ENCODE measurements at regions of chr22 and their contacts with region 1.

Region 1: GRCh38 chr22:33049119-33049729 is 9.0 kb downstream of the SYN3 start:
- DNase-seq: peak in 4 of 5 donors; percentile 25 to 36 (median 32)
- H3K4me3 ChIP-seq: no peak overlapping the region
- H3K4me3 Mint-ChIP-seq: no peak overlapping the region
- H3K27ac ChIP-seq: no peak overlapping the region
- H3K27ac Mint-ChIP-seq: no peak overlapping the region
- H3K4me1 ChIP-seq: no peaks in the 10 kb centered on the region
- H3K4me1 Mint-ChIP-seq: peaks cover 0 to 4% (median 0%) of the 10 kb centered on the region in 4 donors
- H3K27me3 ChIP-seq: no peaks in the 10 kb centered on the region
- H3K27me3 Mint-ChIP-seq: peaks cover 12 to 28% of the 10 kb centered on the region in 2 donors

Region 2: GRCh38 chr22:32528984-32529982 is 519.9 kb before region 1 on chr22:
- CTCF ChIA-PET with region 1: interaction called, 5 read pairs
- POLR2A ChIA-PET with region 1: no interaction called
- intact Hi-C with region 1: loop called (anchors 1 kb)
- DNase-seq: peak; percentile 34 to 50 (median 42)
- H3K4me3 ChIP-seq: no peak overlapping the region
- H3K4me3 Mint-ChIP-seq: no peak overlapping the region
- H3K27ac ChIP-seq: no peak overlapping the region
- H3K27ac Mint-ChIP-seq: no peak overlapping the region
- H3K4me1 ChIP-seq: no peaks in the 10 kb centered on the region
- H3K4me1 Mint-ChIP-seq: no peaks in the 10 kb centered on the region
- H3K27me3 ChIP-seq: no peaks in the 10 kb centered on the region
- H3K27me3 Mint-ChIP-seq: peaks cover 7 to 8% of the 10 kb centered on the region in 2 donors

Region 3: DNA sequence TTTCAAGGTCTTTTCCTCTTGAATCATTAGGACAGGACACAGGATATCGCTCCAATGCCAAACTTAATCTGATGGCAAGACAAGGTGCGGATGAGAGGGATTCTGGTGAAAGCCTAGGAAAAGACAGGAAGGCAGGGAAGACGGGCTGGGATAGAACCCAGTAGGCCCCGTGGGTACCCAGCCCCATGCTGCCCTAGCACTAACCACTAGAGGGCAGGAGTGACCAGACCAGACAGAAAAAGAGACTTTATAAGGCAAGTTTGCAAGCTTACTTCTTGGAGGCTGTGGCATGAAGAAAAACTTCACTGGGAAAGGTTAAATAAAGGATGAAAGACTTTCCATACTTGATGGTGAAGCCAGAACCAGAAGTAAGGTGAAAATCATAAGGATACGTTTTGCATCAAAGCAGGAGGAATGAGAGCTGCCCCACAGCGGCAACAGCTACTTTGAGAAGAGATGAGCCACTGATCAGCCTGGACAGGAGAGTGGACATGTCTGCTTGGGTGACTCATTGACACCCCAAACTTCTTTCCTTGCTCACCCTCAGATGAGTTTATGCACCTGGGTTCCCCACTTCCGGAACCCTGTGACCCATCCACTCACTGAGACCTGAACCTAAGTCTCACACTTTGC is 30.9 kb before region 1 on chr22:
- CTCF ChIA-PET with region 1: interaction called, 11 read pairs
- POLR2A ChIA-PET with region 1: no interaction called
- intact Hi-C with region 1: no loop called
- DNase-seq: peak in 2 of 5 donors; percentile 7 to 9
- H3K4me3 ChIP-seq: no peak overlapping the region
- H3K4me3 Mint-ChIP-seq: no peak overlapping the region
- H3K27ac ChIP-seq: no peak overlapping the region
- H3K27ac Mint-ChIP-seq: no peak overlapping the region
- H3K4me1 ChIP-seq: no peaks in the 10 kb centered on the region
- H3K4me1 Mint-ChIP-seq: peaks cover 0 to 4% (median 0%) of the 10 kb centered on the region in 4 donors
- H3K27me3 ChIP-seq: no peaks in the 10 kb centered on the region
- H3K27me3 Mint-ChIP-seq: peaks cover 0 to 4% of the 10 kb centered on the region in 2 donors

Region 4: GRCh38 chr22:33038131-33038772 is 11.0 kb before region 1 on chr22:
- CTCF ChIA-PET with region 1: interaction called, 13 read pairs
- POLR2A ChIA-PET with region 1: no interaction called
- intact Hi-C with region 1: no loop called
- DNase-seq: no peak
- H3K4me3 ChIP-seq: no peak overlapping the region
- H3K4me3 Mint-ChIP-seq: no peak overlapping the region
- H3K27ac ChIP-seq: no peak overlapping the region
- H3K27ac Mint-ChIP-seq: no peak overlapping the region
- H3K4me1 ChIP-seq: no peaks in the 10 kb centered on the region
- H3K4me1 Mint-ChIP-seq: no peaks in the 10 kb centered on the region
- H3K27me3 ChIP-seq: no peaks in the 10 kb centered on the region
- H3K27me3 Mint-ChIP-seq: peaks cover 5 to 20% of the 10 kb centered on the region in 2 donors

Region 5: GRCh38 chr22:33062361-33062760 is 13.1 kb after region 1 on chr22:
- CTCF ChIA-PET with region 1: interaction called, 12 read pairs
- POLR2A ChIA-PET with region 1: no interaction called
- intact Hi-C with region 1: no loop called
- DNase-seq: no peak
- H3K4me3 ChIP-seq: no peak overlapping the region
- H3K4me3 Mint-ChIP-seq: no peak overlapping the region
- H3K27ac ChIP-seq: no peak overlapping the region
- H3K27ac Mint-ChIP-seq: no peak overlapping the region
- H3K4me1 ChIP-seq: no peaks in the 10 kb centered on the region
- H3K4me1 Mint-ChIP-seq: peaks cover 0 to 2% (median 0%) of the 10 kb centered on the region in 4 donors
- H3K27me3 ChIP-seq: peaks cover 8% of the 10 kb centered on the region
- H3K27me3 Mint-ChIP-seq: peaks cover 18 to 20% of the 10 kb centered on the region in 2 donors

Region 6: GRCh38 chr22:33095661-33096060 is 46.4 kb after region 1 on chr22:
- CTCF ChIA-PET with region 1: no interaction called
- POLR2A ChIA-PET with region 1: no interaction called
- intact Hi-C with region 1: no loop called
- DNase-seq: no peak
- H3K4me3 ChIP-seq: no peak overlapping the region
- H3K4me3 Mint-ChIP-seq: no peak overlapping the region
- H3K27ac ChIP-seq: no peak overlapping the region
- H3K27ac Mint-ChIP-seq: no peak overlapping the region
- H3K4me1 ChIP-seq: no peaks in the 10 kb centered on the region
- H3K4me1 Mint-ChIP-seq: no peaks in the 10 kb centered on the region
- H3K27me3 ChIP-seq: no peaks in the 10 kb centered on the region
- H3K27me3 Mint-ChIP-seq: peaks cover 3% of the 10 kb centered on the region in 2 donors

Region 7: DNA sequence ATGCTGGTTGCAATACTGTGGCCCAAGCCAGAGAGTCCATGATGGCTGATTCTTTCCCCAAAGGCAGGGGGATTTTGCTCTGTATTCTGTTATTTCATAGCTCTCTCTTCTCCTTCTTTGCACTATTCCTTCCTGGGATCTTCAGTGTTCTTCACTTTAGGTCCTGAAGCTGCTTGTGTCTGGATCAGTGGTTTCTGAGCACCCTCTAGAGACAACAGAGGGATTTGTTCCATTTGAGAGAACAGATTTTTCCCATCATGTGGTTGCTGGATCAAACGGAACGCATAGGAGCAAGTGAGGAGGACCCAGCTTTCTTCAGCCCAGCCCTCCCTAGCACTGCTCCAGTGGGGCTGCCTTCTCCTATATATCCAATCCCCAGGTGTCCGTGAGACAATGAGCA is 77.7 kb after region 1 on chr22:
- CTCF ChIA-PET with region 1: no interaction called
- POLR2A ChIA-PET with region 1: no interaction called
- intact Hi-C with region 1: no loop called
- DNase-seq: no peak
- H3K4me3 ChIP-seq: no peak overlapping the region
- H3K4me3 Mint-ChIP-seq: no peak overlapping the region
- H3K27ac ChIP-seq: no peak overlapping the region
- H3K27ac Mint-ChIP-seq: no peak overlapping the region
- H3K4me1 ChIP-seq: no peaks in the 10 kb centered on the region
- H3K4me1 Mint-ChIP-seq: no peaks in the 10 kb centered on the region
- H3K27me3 ChIP-seq: no peaks in the 10 kb centered on the region
- H3K27me3 Mint-ChIP-seq: peaks cover 4 to 7% of the 10 kb centered on the region in 2 donors

Measured in CD4-positive, alpha-beta memory T cell (primary cell).